MCF 10A (cell line): ENCODE measurements at regions of chr5 and their contacts with region 1.

Region 1: GRCh38 chr5:14399054-14399692 is 182.4 kb upstream of the OTULINL start:
- DNase-seq: peak; percentile 64
- H3K4me3 Mint-ChIP-seq: no peak overlapping the region
- H3K27ac Mint-ChIP-seq: no peak overlapping the region
- H3K4me1 Mint-ChIP-seq: no peaks in the 10 kb centered on the region
- H3K27me3 Mint-ChIP-seq: no peaks in the 10 kb centered on the region
- CTCF ChIP-seq: peak; percentile 57

Region 2: GRCh38 chr5:14286574-14287421 is 112.4 kb before region 1 on chr5:
- CTCF ChIA-PET with region 1: no interaction called
- POLR2A ChIA-PET with region 1: no interaction called
- intact Hi-C with region 1: no loop called
- DNase-seq: no peak
- H3K4me3 Mint-ChIP-seq: no peak overlapping the region
- H3K27ac Mint-ChIP-seq: no peak overlapping the region
- H3K4me1 Mint-ChIP-seq: peaks cover 5% of the 10 kb centered on the region
- H3K27me3 Mint-ChIP-seq: no peaks in the 10 kb centered on the region
- CTCF ChIP-seq: no peak

Region 3: GRCh38 chr5:14383923-14384322 is 15.2 kb before region 1 on chr5:
- CTCF ChIA-PET with region 1: interaction called, 21 read pairs
- POLR2A ChIA-PET with region 1: no interaction called
- intact Hi-C with region 1: no loop called
- DNase-seq: no peak
- H3K4me3 Mint-ChIP-seq: no peak overlapping the region
- H3K27ac Mint-ChIP-seq: peak overlapping the region; percentile 23
- H3K4me1 Mint-ChIP-seq: no peaks in the 10 kb centered on the region
- H3K27me3 Mint-ChIP-seq: no peaks in the 10 kb centered on the region
- CTCF ChIP-seq: no peak

Region 4: GRCh38 chr5:14410394-14411201 is 11.4 kb after region 1 on chr5:
- CTCF ChIA-PET with region 1: interaction called, 17 read pairs
- POLR2A ChIA-PET with region 1: no interaction called
- intact Hi-C with region 1: no loop called
- DNase-seq: no peak
- H3K4me3 Mint-ChIP-seq: no peak overlapping the region
- H3K27ac Mint-ChIP-seq: no peak overlapping the region
- H3K4me1 Mint-ChIP-seq: no peaks in the 10 kb centered on the region
- H3K27me3 Mint-ChIP-seq: no peaks in the 10 kb centered on the region
- CTCF ChIP-seq: no peak

Region 5: GRCh38 chr5:14417276-14417730 is 18.1 kb after region 1 on chr5:
- CTCF ChIA-PET with region 1: interaction called, 17 read pairs
- POLR2A ChIA-PET with region 1: no interaction called
- intact Hi-C with region 1: no loop called
- DNase-seq: no peak
- H3K4me3 Mint-ChIP-seq: no peak overlapping the region
- H3K27ac Mint-ChIP-seq: peak overlapping the region; percentile 17
- H3K4me1 Mint-ChIP-seq: no peaks in the 10 kb centered on the region
- H3K27me3 Mint-ChIP-seq: no peaks in the 10 kb centered on the region
- CTCF ChIP-seq: no peak

Region 6: DNA sequence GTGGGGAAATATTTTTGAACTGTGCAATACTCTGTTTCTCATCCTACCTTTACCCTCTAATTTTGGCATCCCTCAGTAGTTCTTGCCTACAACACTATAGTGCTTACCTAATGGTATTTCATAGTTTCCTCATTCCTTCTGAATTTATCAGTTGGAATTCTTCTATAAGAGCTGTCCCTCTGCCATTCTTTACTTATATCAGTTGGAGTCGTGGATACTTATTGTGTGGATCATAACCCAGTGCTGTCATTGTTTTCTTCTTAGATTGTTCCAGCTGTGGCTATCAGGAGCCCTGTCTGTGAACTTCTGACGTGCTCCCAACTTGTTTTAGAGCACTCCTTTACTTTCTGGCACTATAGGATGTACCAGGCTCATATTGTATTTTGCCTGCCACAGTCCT is 36.3 kb after region 1 on chr5:
- CTCF ChIA-PET with region 1: no interaction called
- POLR2A ChIA-PET with region 1: no interaction called
- intact Hi-C with region 1: no loop called
- DNase-seq: no peak
- H3K4me3 Mint-ChIP-seq: no peak overlapping the region
- H3K27ac Mint-ChIP-seq: no peak overlapping the region
- H3K4me1 Mint-ChIP-seq: peaks cover 5% of the 10 kb centered on the region
- H3K27me3 Mint-ChIP-seq: no peaks in the 10 kb centered on the region
- CTCF ChIP-seq: no peak

Region 7: DNA sequence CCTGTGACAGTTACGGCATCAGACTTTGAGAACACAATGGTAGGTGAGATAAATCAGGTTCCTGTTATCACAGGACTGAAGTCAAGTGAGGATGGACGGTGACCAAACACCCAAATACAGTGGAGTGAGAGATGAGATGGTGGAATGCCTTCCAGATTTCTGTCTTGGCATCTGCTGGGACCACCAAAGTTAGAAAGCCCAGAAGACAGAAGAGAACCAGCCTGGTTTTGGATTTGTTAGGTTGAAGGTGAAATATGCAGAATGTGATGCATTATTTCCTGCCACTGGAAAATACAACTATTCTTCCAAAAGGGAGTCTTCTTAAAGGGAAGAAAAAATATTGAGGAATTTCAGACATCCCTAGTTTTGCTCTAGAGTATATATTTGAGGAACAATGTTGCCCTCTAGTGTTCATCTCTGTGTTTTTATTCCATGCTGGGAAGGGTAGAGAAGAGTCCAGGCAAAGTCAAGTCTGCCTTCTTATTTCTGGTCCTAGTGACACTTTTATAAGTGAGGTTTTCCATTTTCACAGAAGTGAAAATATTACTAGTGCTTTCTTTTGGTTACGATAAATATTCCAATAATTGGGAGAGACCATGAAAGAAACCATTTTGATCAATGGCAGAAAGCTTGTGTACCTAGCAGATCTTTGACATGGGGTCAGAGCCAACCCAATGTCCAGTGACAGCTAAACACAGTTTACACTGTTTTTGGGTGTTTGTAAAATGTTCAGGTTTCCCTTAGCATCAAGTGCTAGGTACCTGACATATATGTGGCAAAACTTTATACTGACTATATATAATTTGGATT is 614.7 kb after region 1 on chr5:
- CTCF ChIA-PET with region 1: no interaction called
- POLR2A ChIA-PET with region 1: no interaction called
- intact Hi-C with region 1: loop called (anchors 5 kb)
- DNase-seq: peak; percentile 69
- H3K4me3 Mint-ChIP-seq: no peak overlapping the region
- H3K27ac Mint-ChIP-seq: no peak overlapping the region
- H3K4me1 Mint-ChIP-seq: peaks cover 14% of the 10 kb centered on the region
- H3K27me3 Mint-ChIP-seq: no peaks in the 10 kb centered on the region
- CTCF ChIP-seq: peak; percentile 56